Activated CD8-positive, alpha-beta T cell treated with anti-CD3 and anti-CD28 coated beads for 36 hours (primary cell): ENCODE measurements at regions of chr20 and their contacts with region 1.

Region 1: GRCh38 chr20:17431621-17432364 is 99.4 kb downstream of the BFSP1 start:
- DNase-seq: peak; percentile 65
- ATAC-seq: no peak
- H3K4me3 Mint-ChIP-seq: no peak overlapping the region
- H3K27ac Mint-ChIP-seq: no peak overlapping the region
- H3K4me1 Mint-ChIP-seq: no peaks in the 10 kb centered on the region
- H3K27me3 Mint-ChIP-seq: peaks cover 5% of the 10 kb centered on the region
- CTCF ChIP-seq: peak; percentile 97

Region 2: DNA sequence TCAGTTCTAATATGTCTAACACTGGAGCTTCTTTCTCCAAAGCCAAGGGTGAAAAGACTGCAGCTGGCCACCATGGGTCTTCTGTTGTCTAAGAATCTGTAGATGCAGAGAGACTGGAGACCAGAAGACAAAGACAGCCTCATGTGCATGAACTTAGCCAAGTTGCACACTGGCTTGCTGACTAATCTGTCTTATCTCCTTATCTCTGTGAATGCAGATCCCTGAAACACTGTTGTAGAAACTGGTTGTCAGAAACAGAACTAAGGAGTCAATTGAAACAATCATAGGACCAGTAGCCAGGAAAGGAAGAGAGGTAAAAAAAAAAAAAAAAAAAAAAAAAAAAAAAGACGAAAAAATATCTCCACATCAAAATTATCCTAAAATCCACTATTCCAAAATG is 10.3 kb before region 1 on chr20:
- CTCF ChIA-PET with region 1: interaction called, 24 read pairs
- POLR2A ChIA-PET with region 1: no interaction called
- intact Hi-C with region 1: no loop called
- DNase-seq: no peak
- ATAC-seq: no peak
- H3K4me3 Mint-ChIP-seq: no peak overlapping the region
- H3K27ac Mint-ChIP-seq: no peak overlapping the region
- H3K4me1 Mint-ChIP-seq: no peaks in the 10 kb centered on the region
- H3K27me3 Mint-ChIP-seq: peaks cover 2% of the 10 kb centered on the region
- CTCF ChIP-seq: no peak

Region 3: DNA sequence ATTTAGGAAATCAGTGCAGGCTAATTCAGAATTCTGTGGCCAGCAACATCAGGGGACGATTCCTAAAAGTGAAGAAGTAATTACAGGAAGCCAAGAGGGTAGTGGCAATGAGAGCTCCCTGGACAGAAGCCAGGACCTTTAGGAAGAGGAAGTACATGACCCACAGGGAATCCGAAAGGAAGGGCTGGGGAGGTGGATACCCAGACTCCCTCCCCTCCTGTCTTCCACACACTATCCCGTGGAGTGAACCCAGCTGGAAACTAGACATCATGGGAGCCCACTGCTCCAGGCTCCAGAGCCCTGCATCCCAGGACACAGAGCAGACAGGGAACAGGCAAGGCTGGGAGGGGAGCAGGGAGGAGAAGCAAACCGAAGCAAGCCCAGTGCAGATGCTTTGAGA is 453.8 kb after region 1 on chr20:
- CTCF ChIA-PET with region 1: no interaction called
- POLR2A ChIA-PET with region 1: no interaction called
- intact Hi-C with region 1: no loop called
- DNase-seq: no peak
- ATAC-seq: no peak
- H3K4me3 Mint-ChIP-seq: no peak overlapping the region
- H3K27ac Mint-ChIP-seq: no peak overlapping the region
- H3K4me1 Mint-ChIP-seq: no peaks in the 10 kb centered on the region
- H3K27me3 Mint-ChIP-seq: peaks cover 1% of the 10 kb centered on the region
- CTCF ChIP-seq: no peak